Activated CD4-positive, alpha-beta memory T cell treated with anti-CD3 and anti-CD28 coated beads for 36 hours (primary cell): ENCODE measurements at regions of chr6 and their contacts with region 1.

Region 1: GRCh38 chr6:37207903-37208456 is 38.0 kb downstream of the PIM1 start:
- DNase-seq: peak; percentile 95
- H3K4me3 Mint-ChIP-seq: no peak overlapping the region
- H3K27ac Mint-ChIP-seq: peak overlapping the region; percentile 69
- H3K4me1 Mint-ChIP-seq: peaks cover 63% of the 10 kb centered on the region
- H3K27me3 Mint-ChIP-seq: no peaks in the 10 kb centered on the region

Region 2: DNA sequence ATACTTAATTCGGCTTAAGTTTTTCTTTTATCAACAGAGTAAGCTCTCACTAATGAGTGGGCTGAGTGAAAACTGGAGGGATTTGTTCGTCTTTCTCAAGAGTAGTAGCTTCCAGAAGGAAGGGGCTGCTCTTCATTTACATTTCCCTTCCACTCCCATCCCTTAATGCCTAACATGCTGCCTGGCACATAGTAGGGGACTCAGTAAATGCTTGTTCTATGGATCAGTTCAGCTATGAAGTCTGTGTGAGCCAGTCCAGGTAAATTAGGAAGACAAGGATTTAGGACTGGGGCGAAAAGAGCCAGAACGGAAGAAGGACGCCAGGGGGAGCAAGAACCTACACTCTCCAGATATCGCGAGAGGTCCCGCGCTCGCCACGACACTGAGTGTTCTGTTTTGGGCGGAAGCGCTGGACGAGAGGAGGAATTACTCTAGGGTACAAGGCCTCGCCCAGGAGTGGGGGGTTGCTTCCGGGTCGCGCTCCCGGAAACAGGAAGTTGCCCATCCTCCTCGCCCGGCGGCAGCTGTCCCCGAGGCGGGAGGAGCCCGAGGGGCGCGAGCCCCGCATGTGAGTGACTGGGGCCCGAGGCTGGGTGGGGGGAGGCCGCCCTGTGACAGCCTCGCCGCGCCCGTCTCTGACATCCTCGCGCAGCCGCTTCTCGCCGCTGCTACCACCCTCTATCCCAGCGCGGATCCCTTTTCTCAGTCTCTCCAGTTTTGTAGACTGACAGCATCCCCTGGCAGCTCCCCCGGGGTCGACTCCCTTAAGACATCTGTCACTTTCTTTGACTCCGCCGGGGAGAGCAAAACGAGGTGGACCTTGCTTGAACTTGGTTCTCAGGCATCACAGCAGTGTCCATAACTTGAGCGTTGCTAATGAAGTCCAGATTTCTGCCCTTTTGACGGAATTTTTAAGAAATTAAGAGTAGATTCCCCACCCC is 322.2 kb before region 1 on chr6 and contains the start of gene C6orf89:
- CTCF ChIA-PET with region 1: interaction called, 15 read pairs
- POLR2A ChIA-PET with region 1: interaction called, 4 read pairs
- intact Hi-C with region 1: loop called (anchors 2 kb)
- DNase-seq: peak; percentile 98
- H3K4me3 Mint-ChIP-seq: peak within 1 kb of the TSS; percentile 88
- H3K27ac Mint-ChIP-seq: peak within 1 kb of the TSS; percentile 92
- H3K4me1 Mint-ChIP-seq: peaks cover 36% of the 10 kb centered on the region
- H3K27me3 Mint-ChIP-seq: no peaks in the 10 kb centered on the region
- total RNA-seq, gene C6orf89: 29.2 to 29.8 TPM

Region 3: DNA sequence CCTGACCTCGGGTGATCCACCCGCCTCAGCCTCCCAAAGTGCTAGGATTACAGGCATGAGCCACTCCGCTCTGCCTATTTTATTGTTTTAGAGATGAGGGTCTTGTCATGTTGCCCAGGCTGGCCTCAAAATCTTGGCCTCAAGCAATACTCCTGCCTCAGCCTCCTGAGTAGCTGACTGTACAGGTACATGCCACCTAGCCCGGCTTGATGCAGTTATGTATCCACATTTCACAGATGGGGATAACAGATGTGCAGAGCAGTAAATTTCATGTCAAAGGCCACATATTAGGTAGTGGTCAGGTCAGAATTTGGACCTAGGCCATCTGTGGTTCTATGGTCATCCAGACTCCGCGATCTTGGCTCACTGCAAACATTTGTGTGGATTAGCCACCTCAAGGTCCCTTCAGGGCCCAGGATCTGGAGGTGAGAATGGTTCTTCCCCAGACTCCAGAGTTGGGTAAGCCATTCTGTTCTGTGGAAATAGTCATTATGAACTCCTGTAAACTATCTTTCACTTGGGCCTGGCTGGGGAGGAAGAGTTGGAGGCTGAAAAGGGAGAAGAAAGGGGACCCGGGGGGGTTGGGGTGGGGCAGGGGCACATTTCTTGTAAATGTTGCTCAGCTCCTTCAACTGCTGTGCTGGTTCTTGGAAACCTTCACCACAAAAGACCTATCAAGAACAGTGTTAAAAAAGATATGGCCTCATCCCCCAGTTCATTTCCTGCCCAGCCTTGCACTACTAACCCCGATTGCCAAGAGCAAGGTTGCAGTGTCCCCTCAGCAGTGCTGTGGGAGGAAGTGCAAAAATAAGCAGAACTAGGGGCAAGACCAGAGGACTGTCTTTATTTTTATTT is 25.0 kb before region 1 on chr6:
- CTCF ChIA-PET with region 1: interaction called, 283 read pairs
- POLR2A ChIA-PET with region 1: no interaction called
- intact Hi-C with region 1: loop called (anchors 1 kb)
- DNase-seq: peak; percentile 82
- H3K4me3 Mint-ChIP-seq: peak overlapping the region; percentile 48
- H3K27ac Mint-ChIP-seq: peak overlapping the region; percentile 96
- H3K4me1 Mint-ChIP-seq: peaks cover 55% of the 10 kb centered on the region
- H3K27me3 Mint-ChIP-seq: no peaks in the 10 kb centered on the region

Region 4: DNA sequence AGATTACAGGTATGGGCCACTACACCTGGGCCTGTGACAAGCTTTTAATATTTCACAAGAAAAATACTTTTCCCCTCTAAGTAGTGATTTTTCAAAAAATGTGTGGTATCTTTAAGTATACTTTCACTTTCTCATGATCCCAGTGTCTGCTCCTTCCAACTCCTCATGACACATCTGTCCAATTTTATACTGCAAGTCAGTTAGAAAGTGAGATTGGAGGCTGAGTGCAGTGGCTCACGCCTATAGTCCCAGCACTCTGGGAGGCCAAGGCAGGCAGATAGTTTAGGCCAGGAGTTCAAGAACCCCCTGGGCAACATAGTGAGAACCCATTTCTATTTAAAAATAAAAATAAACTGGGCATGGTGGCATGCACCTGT is 17.8 kb before region 1 on chr6:
- CTCF ChIA-PET with region 1: interaction called, 33 read pairs
- POLR2A ChIA-PET with region 1: interaction called, 3 read pairs
- intact Hi-C with region 1: no loop called
- DNase-seq: peak; percentile 58
- H3K4me3 Mint-ChIP-seq: no peak overlapping the region
- H3K27ac Mint-ChIP-seq: peak overlapping the region; percentile 72
- H3K4me1 Mint-ChIP-seq: peaks cover 67% of the 10 kb centered on the region
- H3K27me3 Mint-ChIP-seq: no peaks in the 10 kb centered on the region

Region 5: GRCh38 chr6:37222125-37222967 is 14.4 kb after region 1 on chr6:
- CTCF ChIA-PET with region 1: interaction called, 55 read pairs
- POLR2A ChIA-PET with region 1: no interaction called
- intact Hi-C with region 1: no loop called
- DNase-seq: peak; percentile 89
- H3K4me3 Mint-ChIP-seq: peak overlapping the region; percentile 73
- H3K27ac Mint-ChIP-seq: no peak overlapping the region
- H3K4me1 Mint-ChIP-seq: peaks cover 18% of the 10 kb centered on the region
- H3K27me3 Mint-ChIP-seq: no peaks in the 10 kb centered on the region

Region 6: DNA sequence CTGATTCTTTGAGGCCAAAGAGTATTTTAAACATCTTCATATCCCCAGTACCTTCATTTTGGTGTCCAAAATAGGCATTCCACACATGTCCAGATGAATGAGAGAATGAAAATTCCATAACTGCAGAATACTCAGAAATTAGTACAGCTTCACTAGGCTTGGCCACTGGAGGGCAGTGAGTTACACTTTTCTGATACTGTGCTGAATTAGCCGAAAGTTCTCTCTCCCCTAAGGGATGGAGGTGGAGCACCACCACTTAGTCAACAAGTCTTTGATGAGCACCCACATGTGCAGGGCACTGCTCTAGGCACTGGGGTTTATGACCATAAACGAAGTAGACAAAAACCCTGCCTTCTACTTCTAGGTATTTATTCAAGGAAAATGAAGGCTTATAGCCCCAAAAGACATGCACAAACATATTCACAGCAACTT is 96.0 kb after region 1 on chr6:
- CTCF ChIA-PET with region 1: no interaction called
- POLR2A ChIA-PET with region 1: no interaction called
- intact Hi-C with region 1: no loop called
- DNase-seq: peak; percentile 28
- H3K4me3 Mint-ChIP-seq: no peak overlapping the region
- H3K27ac Mint-ChIP-seq: no peak overlapping the region
- H3K4me1 Mint-ChIP-seq: peaks cover 8% of the 10 kb centered on the region
- H3K27me3 Mint-ChIP-seq: no peaks in the 10 kb centered on the region

Region 7: DNA sequence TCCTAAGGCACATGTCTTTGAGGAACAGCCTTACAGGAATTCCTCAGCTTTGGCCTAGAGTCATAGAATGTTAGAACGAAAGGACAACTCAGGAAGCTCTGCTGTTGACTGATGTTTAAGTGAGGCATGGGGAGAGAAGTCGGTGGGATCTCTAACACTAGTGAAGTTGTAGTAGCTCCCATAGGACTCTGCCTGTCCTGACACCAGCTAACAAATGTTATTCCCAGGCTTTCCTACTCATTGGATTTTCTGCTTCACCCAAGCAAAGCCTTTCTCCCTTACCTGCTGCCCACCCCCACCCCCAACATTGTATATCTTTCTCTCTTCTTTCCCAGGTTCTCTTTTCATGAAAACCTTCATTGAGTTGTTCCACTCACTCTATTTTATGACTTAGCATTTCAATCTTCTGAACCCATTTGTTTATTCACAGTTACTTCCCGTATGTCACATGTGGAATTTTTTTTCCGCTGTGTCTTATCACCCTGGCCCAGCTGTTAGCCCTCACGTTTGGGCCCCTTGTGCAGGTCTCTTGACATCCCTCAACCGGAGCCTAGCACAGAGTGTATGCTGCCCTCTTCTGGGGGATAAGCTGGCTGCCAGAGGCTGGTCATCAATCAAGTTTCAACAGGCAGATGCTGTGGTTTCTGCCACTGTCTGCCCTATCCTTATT is 106.6 kb after region 1 on chr6:
- CTCF ChIA-PET with region 1: interaction called, 10 read pairs
- POLR2A ChIA-PET with region 1: no interaction called
- intact Hi-C with region 1: no loop called
- DNase-seq: peak; percentile 66
- H3K4me3 Mint-ChIP-seq: no peak overlapping the region
- H3K27ac Mint-ChIP-seq: no peak overlapping the region
- H3K4me1 Mint-ChIP-seq: peaks cover 3% of the 10 kb centered on the region
- H3K27me3 Mint-ChIP-seq: no peaks in the 10 kb centered on the region

Region 8: DNA sequence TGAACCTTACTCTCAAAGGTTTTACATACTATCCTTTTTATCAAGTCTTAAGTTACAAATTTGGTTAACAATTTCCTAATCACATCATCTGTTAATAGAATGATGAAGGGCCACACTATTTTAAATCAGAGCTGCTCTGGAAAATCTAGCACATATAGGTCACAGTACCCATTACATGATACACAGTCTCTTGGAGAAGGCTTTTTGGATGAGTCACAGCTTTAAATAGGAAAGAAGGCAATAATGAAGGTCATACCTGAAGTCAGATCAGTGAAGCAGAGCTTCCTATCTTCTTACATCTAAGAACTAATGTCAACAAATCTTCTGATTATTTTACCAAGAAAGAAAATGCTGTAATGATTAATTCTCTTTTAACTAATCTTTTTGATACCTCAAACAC is 1183.2 kb after region 1 on chr6:
- CTCF ChIA-PET with region 1: no interaction called
- POLR2A ChIA-PET with region 1: no interaction called
- intact Hi-C with region 1: no loop called
- DNase-seq: no peak
- H3K4me3 Mint-ChIP-seq: no peak overlapping the region
- H3K27ac Mint-ChIP-seq: no peak overlapping the region
- H3K4me1 Mint-ChIP-seq: no peaks in the 10 kb centered on the region
- H3K27me3 Mint-ChIP-seq: no peaks in the 10 kb centered on the region